ENCODE measurements at regions of chr15 and their contacts with region 1.

Region 1: DNA sequence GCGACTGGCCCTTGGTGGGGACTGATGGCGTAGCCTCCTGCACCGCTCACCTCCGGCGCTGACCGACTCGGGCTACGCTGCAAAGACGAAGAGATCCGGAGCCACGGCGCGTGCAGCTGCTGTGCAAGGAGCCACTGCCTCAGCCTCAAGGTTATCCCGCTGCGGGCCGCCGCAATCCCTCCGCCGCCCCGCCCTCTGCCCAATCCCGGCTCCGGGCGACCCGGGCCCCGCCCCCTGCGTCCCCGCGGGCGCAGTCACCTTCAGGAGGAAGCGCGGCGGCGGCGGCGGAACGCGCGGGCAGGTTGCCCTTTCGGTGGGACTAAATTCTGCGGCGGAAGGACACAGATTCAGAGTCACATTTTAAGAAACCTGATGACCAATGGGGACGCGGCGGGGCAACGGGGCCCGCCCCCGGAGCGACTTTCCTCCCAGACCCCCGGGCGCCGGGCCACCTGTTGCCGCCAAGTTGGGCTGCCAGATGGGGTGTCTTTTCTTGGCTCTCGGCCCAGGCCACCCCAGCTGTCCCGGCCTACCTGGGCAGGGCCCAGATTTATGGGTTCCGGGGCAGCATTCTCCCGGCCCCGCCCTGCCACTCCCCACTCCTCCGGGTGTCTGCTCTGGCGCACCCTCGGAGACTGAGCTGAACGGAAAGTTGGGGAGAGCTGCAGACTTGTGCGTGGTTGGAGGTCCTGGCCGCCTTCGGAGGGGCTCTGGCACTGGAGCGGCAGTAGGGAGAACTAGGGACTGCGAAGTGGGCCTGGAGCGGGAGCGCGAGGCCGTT is at the start of gene PKM:
- DNase-seq: peak; percentile 97
- ATAC-seq: peak; percentile 66
- H3K4me3 ChIP-seq: peak within 1 kb of the TSS; percentile 96
- H3K27ac ChIP-seq: peak within 1 kb of the TSS; percentile 100
- H3K4me1 ChIP-seq: peaks cover 15% of the 10 kb centered on the region
- H3K27me3 ChIP-seq: no peaks in the 10 kb centered on the region
- CTCF ChIP-seq: no peak
- POLR2A ChIP-seq: peak; percentile 98
- RAD21 ChIP-seq: no peak; the same call in 1 of the 2 replicates
- total RNA-seq, gene PKM: 2,738 and 3,859 TPM in 2 replicates

Region 2: DNA sequence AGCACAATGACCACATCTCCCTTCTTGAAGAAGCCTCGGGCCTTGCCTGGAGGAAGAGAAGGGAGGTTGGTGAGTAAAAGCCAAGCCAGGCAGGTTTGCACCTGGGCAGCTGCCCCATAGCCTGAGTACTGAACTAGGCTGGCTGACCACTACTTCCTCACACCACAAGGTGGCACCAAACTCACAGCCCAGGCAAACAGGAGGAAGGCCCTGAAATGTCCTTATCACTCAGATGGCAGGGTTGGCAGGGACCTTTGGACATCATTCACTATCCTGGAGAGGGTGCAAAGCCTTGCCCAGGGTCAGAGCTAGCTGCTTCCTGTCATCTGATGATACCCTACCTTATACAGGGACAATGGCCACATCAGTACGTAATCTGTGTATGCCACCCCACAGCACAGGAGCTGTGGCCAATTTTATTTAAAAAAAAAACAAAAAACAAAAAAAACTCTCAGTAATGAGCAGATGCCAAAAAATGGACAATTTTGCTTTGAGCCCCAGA is 31.5 kb before region 1 on chr15:
- CTCF ChIA-PET with region 1: interaction called, 3 read pairs
- POLR2A ChIA-PET with region 1: interaction called, 7 read pairs
- dilution Hi-C with region 1: no loop called
- in situ Hi-C with region 1: no loop called
- intact Hi-C with region 1: loop called (anchors 2 kb)
- DNase-seq: peak; percentile 71
- ATAC-seq: peak; percentile 40
- H3K4me3 ChIP-seq: no peak overlapping the region
- H3K27ac ChIP-seq: no peak overlapping the region
- H3K4me1 ChIP-seq: peaks cover 2% of the 10 kb centered on the region; the same call in 1 of the 2 replicates
- H3K27me3 ChIP-seq: no peaks in the 10 kb centered on the region
- CTCF ChIP-seq: peak; percentile 81
- POLR2A ChIP-seq: no peak
- RAD21 ChIP-seq: peak; percentile 86

Region 3: GRCh38 chr15:72217216-72217615 is 14.0 kb before region 1 on chr15:
- CTCF ChIA-PET with region 1: interaction called, 11 read pairs
- POLR2A ChIA-PET with region 1: interaction called, 7 read pairs
- dilution Hi-C with region 1: no loop called
- in situ Hi-C with region 1: no loop called
- intact Hi-C with region 1: no loop called
- DNase-seq: no peak
- ATAC-seq: no peak
- H3K4me3 ChIP-seq: no peak overlapping the region
- H3K27ac ChIP-seq: no peak overlapping the region
- H3K4me1 ChIP-seq: peaks cover 10% of the 10 kb centered on the region
- H3K27me3 ChIP-seq: no peaks in the 10 kb centered on the region
- CTCF ChIP-seq: no peak
- POLR2A ChIP-seq: no peak
- RAD21 ChIP-seq: no peak

Region 4: GRCh38 chr15:72252663-72253299 is 21.5 kb after region 1 on chr15:
- CTCF ChIA-PET with region 1: no interaction called
- POLR2A ChIA-PET with region 1: interaction called, 16 read pairs
- dilution Hi-C with region 1: no loop called
- in situ Hi-C with region 1: no loop called
- intact Hi-C with region 1: no loop called
- DNase-seq: no peak
- ATAC-seq: no peak
- H3K4me3 ChIP-seq: no peak overlapping the region
- H3K27ac ChIP-seq: no peak overlapping the region
- H3K4me1 ChIP-seq: no peaks in the 10 kb centered on the region
- H3K27me3 ChIP-seq: no peaks in the 10 kb centered on the region
- CTCF ChIP-seq: no peak
- POLR2A ChIP-seq: no peak
- RAD21 ChIP-seq: no peak